ENCODE measurements at regions of chr16 and their contacts with region 1.

Region 1: GRCh38 chr16:15643048-15643945 is at the start of gene MARF1:
- DNase-seq: peak; percentile 83 to 99
- H3K4me3 ChIP-seq: peak within 1 kb of the TSS; percentile 75
- H3K27ac ChIP-seq: peak within 1 kb of the TSS; percentile 97
- H3K4me1 ChIP-seq: peaks cover 33% of the 10 kb centered on the region
- H3K27me3 ChIP-seq: no peaks in the 10 kb centered on the region
- CTCF ChIP-seq: peak; percentile 60; the same call in 1 of the 2 replicates
- total RNA-seq, gene MARF1: 68.1 and 69.4 TPM in 2 replicates

Region 2: DNA sequence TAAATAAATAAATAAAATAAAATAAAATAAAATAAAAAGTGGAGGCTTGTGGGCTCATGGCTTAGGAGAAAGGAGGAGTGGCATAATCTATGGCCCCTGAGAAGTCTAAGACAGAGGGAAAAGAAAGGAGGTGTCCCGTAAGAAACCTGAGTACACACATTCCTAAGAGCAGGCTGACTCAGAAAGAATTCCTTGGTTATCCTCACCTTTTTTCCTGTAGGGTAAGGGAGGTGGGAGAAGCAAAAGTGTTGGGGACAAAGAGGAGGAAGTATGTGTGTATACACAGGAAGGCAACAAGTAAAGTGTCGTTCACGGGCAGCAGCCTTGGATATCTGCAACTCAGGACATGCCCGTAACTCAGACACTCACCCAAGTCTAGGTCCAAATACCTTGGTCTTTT is 29.6 kb before region 1 on chr16:
- CTCF ChIA-PET with region 1: interaction called, 22 read pairs
- POLR2A ChIA-PET with region 1: interaction called, 35 read pairs
- intact Hi-C with region 1: no loop called
- DNase-seq: peak; percentile 60 to 91
- H3K4me3 ChIP-seq: peak overlapping the region; percentile 45; the same call in 1 of the 2 replicates
- H3K27ac ChIP-seq: peak overlapping the region; percentile 98
- H3K4me1 ChIP-seq: peaks cover 37% of the 10 kb centered on the region
- H3K27me3 ChIP-seq: no peaks in the 10 kb centered on the region
- CTCF ChIP-seq: no peak

Region 3: DNA sequence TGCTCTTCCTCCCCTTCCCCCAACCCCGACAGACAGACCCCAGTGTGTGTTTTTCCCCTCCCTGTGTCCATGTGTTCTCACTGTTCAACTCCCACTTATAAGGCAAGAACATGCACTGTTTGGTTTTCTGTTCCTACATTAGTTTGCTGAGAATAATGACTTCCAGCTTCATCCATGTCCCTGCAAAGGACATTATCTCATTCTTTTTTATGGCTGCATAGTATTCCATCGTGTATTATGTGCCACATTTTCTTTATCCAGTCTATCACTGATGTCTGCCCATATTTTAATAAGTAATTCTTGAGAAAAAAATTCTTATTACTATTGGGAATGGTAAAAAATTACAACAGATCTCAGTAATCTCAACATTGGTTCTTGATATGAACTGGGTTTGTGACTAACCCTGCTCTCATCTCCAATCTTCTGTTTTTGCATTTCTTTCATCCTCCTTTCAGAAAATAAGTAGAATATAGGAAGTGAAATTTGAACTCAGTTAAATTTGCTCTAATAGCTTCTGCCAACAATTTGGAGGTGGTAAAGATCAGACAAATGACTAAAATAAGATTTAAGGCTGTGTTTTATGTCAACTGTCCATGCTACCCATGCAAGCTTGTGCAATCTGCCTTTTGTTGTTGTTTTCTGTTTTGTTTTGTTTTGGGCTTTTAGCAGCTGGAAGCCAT is 11.4 kb before region 1 on chr16:
- CTCF ChIA-PET with region 1: no interaction called
- POLR2A ChIA-PET with region 1: interaction called, 12 read pairs
- intact Hi-C with region 1: no loop called
- DNase-seq: no peak
- H3K4me3 ChIP-seq: no peak overlapping the region
- H3K27ac ChIP-seq: no peak overlapping the region
- H3K4me1 ChIP-seq: peaks cover 18% of the 10 kb centered on the region
- H3K27me3 ChIP-seq: no peaks in the 10 kb centered on the region
- CTCF ChIP-seq: no peak

Region 4: GRCh38 chr16:15949210-15950160 is 306.2 kb after region 1 on chr16 and contains the start of gene ABCC1:
- CTCF ChIA-PET with region 1: no interaction called
- POLR2A ChIA-PET with region 1: no interaction called
- intact Hi-C with region 1: no loop called
- DNase-seq: peak in 1 of 2 experiments; percentile 51
- H3K4me3 ChIP-seq: peak within 1 kb of the TSS; percentile 96
- H3K27ac ChIP-seq: peak within 1 kb of the TSS; percentile 61
- H3K4me1 ChIP-seq: peaks cover 52% of the 10 kb centered on the region
- H3K27me3 ChIP-seq: no peaks in the 10 kb centered on the region
- CTCF ChIP-seq: no peak; the same call in 1 of the 2 replicates
- total RNA-seq, gene ABCC1: 139 and 146 TPM in 2 replicates

Measured in PC-9 (cell line).